A549 (cell line): ENCODE measurements at regions of chr16 and their contacts with region 1.

Region 1: GRCh38 chr16:89909777-89910716 is 8.6 kb upstream of the MC1R start:
- DNase-seq: peak; percentile 79 to 80
- ATAC-seq: peak; percentile 64 to 87
- H3K4me3 ChIP-seq: no peak overlapping the region
- H3K27ac ChIP-seq: peak overlapping the region in 1 of 2 experiments; percentile 68; a peak in 3 of 6 replicates
- H3K4me1 ChIP-seq: peaks cover 4% of the 10 kb centered on the region; the same call in 2 of the 3 replicates
- CTCF ChIP-seq: peak; percentile 66
- EP300 ChIP-seq: no peak
- POLR2A ChIP-seq: 0 out of 2 replicates have a peak, but pooled peaks have one; percentile 11
- RAD21 ChIP-seq: peak; percentile 43 to 55; a peak in 4 of 5 replicates

Region 2: DNA sequence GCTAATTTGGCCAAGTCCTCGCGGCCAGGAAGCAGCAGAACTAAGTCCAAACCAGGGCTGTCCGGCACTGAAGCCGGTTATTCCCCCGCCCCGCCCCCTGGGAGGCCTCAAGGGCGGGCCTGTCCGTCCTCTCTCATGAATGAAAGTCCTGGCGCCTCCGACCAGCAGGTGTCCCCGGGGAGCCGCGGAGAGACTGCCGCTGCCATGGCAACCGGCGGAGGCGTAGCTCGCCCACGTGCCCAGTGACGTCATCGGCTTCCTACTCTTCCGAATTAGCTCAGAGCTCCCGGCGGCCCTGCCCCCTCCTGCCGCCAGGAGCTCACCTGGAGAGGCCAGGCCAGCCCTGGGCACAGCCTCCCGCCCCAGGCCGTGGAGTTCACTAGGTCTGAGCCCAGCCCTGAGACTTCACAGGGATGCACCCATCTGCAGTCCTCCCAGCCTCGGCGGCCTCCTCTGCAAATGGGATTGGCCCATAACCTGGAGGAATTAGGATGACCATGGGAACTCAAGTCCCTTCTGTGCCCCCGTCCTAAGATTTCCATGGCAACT is 209.9 kb before region 1 on chr16:
- CTCF ChIA-PET with region 1: interaction called, 17 read pairs
- POLR2A ChIA-PET with region 1: no interaction called
- DNase-seq: peak; percentile 93 to 99
- ATAC-seq: peak; percentile 49 to 76
- H3K4me3 ChIP-seq: peak overlapping the region; percentile 69
- H3K27ac ChIP-seq: peak overlapping the region; percentile 82 to 92
- H3K4me1 ChIP-seq: peaks cover 12% of the 10 kb centered on the region
- CTCF ChIP-seq: peak; percentile 69
- EP300 ChIP-seq: no peak
- POLR2A ChIP-seq: no peak
- RAD21 ChIP-seq: peak; percentile 63 to 71

Region 3: DNA sequence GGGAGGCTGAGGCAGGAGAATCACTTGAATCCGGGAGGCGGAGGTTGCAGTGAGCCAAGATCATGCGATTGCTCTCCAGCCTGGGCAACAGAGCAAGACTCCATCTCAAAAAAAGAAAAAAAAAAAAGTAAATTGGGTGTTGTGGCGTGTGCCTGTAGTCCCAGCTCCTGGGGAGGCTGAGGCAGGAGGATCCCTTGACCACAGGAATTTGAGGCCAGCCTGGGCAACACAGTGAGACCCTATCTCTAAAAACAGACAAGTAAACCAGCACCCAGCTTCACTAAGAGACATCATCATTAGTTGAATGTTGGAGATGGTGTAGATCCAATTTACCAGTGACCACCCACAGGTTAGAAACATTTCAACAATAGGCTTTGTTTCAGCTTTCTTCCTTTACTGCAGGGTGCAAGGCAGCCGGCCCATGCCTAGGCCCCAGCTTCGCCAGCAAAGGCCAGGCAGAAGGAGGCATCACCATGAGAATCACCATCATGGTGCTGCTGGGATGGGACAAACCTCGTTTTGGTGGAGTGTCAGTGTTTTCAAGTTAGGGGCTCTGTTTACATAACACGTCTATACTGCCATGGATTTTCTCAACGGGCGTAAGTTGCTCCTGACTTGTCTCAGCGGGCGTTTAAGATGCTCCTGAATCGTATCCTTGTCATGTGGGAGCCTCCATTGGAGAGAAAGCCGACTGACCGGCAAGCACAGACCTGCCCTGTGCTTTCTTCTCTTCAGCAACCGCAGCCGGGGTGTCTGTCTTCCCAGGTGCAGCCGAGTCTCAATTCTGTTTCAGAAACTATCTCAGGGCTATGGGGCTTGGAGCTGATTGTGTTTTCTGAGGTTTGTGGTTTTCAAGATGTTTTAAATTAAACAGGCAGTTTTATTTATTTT is 29.3 kb before region 1 on chr16:
- CTCF ChIA-PET with region 1: interaction called, 10 read pairs
- POLR2A ChIA-PET with region 1: interaction called, 19 read pairs
- DNase-seq: no peak
- ATAC-seq: no peak
- H3K4me3 ChIP-seq: no peak overlapping the region
- H3K27ac ChIP-seq: no peak overlapping the region
- H3K4me1 ChIP-seq: no peaks in the 10 kb centered on the region
- CTCF ChIP-seq: no peak
- EP300 ChIP-seq: no peak
- POLR2A ChIP-seq: no peak
- RAD21 ChIP-seq: no peak

Region 4: DNA sequence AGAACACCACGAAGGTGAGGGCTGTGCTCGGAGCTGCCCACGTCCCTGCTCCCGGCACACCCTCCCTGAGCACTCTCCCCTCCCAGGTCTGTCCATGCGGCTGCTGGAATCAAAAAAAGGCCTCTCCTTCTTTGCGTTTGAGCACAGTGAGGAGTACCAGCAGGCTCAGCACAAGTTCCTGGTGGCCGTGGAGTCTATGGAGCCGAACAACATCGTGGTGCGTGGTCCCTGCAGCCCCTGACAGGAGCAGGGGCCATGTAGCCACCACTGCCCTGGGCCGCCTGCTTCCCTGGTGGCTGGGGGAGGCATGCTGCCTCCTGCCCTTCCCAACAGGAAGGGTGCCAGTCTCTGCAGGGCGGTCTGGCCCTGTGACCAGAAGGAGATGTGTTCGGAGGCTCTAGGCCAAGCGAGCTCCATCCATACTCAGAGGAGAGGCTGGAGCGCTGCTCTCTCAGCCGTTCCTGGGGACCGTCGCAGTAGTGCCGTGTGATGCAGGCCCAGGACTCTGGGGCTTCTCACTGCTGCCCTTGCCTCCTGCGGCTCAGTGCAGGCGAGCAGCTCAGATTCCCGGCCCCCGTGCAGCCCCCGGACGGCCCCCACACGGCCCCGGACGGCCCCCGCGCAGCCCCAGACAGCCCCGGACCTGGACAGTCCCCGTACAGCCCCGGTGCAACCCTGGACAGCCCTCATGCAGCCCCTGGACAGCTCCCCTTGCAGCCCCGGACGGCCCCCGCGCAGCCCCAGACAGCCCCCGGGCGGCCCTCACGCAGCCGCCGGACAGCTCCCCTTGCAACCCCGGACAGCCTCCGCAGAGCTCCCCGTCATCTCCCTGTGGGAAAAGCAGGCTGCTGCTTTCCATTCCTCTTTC is 16.2 kb before region 1 on chr16:
- CTCF ChIA-PET with region 1: interaction called, 20 read pairs
- POLR2A ChIA-PET with region 1: no interaction called
- DNase-seq: no peak
- ATAC-seq: peak; percentile 13 to 20; a peak in 4 of 6 replicates
- H3K4me3 ChIP-seq: no peak overlapping the region
- H3K27ac ChIP-seq: no peak overlapping the region
- H3K4me1 ChIP-seq: no peaks in the 10 kb centered on the region
- CTCF ChIP-seq: no peak
- EP300 ChIP-seq: no peak
- POLR2A ChIP-seq: no peak
- RAD21 ChIP-seq: no peak

Region 5: DNA sequence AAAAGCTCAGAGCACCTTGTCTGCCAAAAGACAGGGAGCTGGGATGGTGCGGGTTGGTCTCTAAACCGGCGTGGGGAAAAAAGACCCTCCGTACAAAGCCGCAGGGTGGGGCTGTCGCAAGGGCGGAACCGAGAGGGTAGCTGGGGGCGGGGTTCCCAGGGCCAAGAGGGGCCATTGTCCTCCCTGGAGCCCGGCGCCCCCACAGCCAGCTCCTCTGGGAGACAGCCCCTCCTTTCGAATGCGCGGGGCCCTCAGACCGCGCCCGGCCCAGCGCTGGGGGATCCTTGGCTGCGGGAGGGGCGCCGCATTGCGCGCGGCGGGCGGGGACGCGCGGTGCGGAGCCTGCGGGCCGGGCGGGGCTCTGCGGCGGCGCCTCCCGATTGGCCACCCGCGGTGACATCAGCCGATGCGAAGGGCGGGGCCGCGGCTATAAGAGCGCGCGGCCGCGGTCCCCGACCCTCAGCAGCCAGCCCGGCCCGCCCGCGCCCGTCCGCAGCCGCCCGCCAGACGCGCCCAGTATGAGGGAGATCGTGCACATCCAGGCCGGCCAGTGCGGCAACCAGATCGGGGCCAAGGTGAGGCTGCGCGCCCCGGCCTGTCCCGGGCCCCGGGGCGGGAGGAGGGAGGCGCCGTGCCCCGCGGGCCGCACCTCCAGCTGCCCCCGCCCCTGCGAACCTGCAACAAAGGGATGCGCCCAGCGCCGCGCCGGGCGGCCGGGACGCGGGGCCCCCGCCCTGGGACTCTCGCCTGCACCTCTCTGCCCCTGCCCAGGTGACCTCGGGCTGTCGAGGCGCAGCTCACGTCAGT is 13.0 kb after region 1 on chr16 and contains the start of gene TUBB3:
- CTCF ChIA-PET with region 1: interaction called, 109 read pairs
- POLR2A ChIA-PET with region 1: interaction called, 20 read pairs
- DNase-seq: peak; percentile 80 to 94
- ATAC-seq: peak; percentile 15 to 24
- H3K4me3 ChIP-seq: peak within 1 kb of the TSS; percentile 83
- H3K27ac ChIP-seq: peak within 1 kb of the TSS; percentile 98 to 99
- H3K4me1 ChIP-seq: peaks cover 53% of the 10 kb centered on the region
- CTCF ChIP-seq: no peak
- EP300 ChIP-seq: no peak
- POLR2A ChIP-seq: peak; percentile 99
- RAD21 ChIP-seq: no peak
- polyA plus RNA-seq, gene TUBB3: 48.8 and 48.9 TPM in 2 replicates

Region 6: DNA sequence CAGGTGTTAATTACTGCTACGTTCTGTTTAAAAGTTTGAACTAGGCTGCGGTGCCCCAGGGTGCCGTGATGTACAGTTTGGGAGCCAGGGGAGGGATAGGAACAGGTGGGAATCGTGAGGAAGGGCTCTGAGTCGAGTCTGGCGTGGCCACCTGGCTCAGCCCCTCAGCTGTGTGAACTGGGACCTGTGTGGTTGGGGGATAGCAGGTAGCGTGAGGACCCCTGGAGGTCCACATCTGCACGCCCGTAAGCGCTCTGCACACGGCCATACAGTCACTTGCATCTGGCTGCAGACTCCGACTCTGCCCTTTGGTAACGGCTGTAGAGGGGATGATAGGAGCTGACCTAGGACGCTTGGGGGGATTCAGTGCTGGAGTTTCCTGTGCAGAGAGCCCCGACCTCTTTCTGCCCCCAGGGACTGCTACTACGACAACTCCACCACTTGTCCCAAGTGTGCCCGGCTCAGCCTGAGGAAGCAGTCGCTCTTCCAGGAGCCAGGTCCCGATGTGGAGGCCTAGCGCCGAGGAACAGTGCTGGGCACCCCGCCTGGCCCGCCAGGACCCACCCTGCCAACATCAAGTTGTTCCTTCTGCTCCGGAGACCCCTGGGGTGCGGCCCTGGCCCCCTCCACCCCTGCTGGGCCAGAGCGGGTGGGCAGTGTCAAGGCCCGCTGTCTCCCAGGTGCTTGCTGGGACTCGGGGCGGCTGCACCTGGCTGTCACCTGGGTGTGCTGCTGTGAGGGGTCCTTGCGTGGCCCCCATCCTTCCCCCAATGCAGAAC is 55.6 kb after region 1 on chr16:
- CTCF ChIA-PET with region 1: no interaction called
- POLR2A ChIA-PET with region 1: no interaction called
- DNase-seq: no peak
- ATAC-seq: no peak
- H3K4me3 ChIP-seq: no peak overlapping the region
- H3K27ac ChIP-seq: no peak overlapping the region
- H3K4me1 ChIP-seq: no peaks in the 10 kb centered on the region
- CTCF ChIP-seq: no peak
- EP300 ChIP-seq: no peak
- POLR2A ChIP-seq: no peak
- RAD21 ChIP-seq: no peak

Region 7: GRCh38 chr16:90031931-90032687 is 122.1 kb after region 1 on chr16:
- CTCF ChIA-PET with region 1: no interaction called
- POLR2A ChIA-PET with region 1: no interaction called
- DNase-seq: no peak
- ATAC-seq: 0 out of 6 replicates have a peak, but pooled peaks of 1 of the 2 experiments have one; percentile 16
- H3K4me3 ChIP-seq: no peak overlapping the region
- H3K27ac ChIP-seq: no peak overlapping the region
- H3K4me1 ChIP-seq: no peaks in the 10 kb centered on the region
- CTCF ChIP-seq: no peak
- EP300 ChIP-seq: no peak
- POLR2A ChIP-seq: no peak
- RAD21 ChIP-seq: no peak